Naive thymus-derived CD4-positive, alpha-beta T cell (primary cell): ENCODE measurements at regions of chr1 and their contacts with region 1.

Region 1: GRCh38 chr1:185670187-185670627 is 64.0 kb upstream of the HMCN1 start:
- DNase-seq: peak in 8 of 9 donors; percentile 28 to 72 (median 59)
- ATAC-seq: peak; percentile 82
- H3K4me3 ChIP-seq: no peak overlapping the region
- H3K4me3 Mint-ChIP-seq: no peak overlapping the region
- H3K27ac ChIP-seq: no peak overlapping the region
- H3K27ac Mint-ChIP-seq: peak overlapping the region in 8 of 9 donors; percentile 12 to 75 (median 60)
- H3K4me1 ChIP-seq: peaks cover 4 to 20% of the 10 kb centered on the region in 2 donors
- H3K4me1 Mint-ChIP-seq: peaks cover 22 to 44% (median 33%) of the 10 kb centered on the region in 7 donors
- H3K27me3 ChIP-seq: no peaks in the 10 kb centered on the region
- H3K27me3 Mint-ChIP-seq: no peaks in the 10 kb centered on the region

Region 2: GRCh38 chr1:184805667-184806295 is 864.4 kb before region 1 on chr1:
- CTCF ChIA-PET with region 1: interaction called, 13 read pairs
- POLR2A ChIA-PET with region 1: no interaction called
- intact Hi-C with region 1: no loop called
- DNase-seq: peak; percentile 49 to 79 (median 68)
- ATAC-seq: peak; percentile 94
- H3K4me3 ChIP-seq: no peak overlapping the region
- H3K4me3 Mint-ChIP-seq: peak overlapping the region in 2 of 10 donors; percentile 2 to 27
- H3K27ac ChIP-seq: no peak overlapping the region
- H3K27ac Mint-ChIP-seq: peak overlapping the region in 2 of 9 donors; percentile 7 to 16
- H3K4me1 ChIP-seq: no peaks in the 10 kb centered on the region
- H3K4me1 Mint-ChIP-seq: peaks cover 4 to 6% (median 5%) of the 10 kb centered on the region in 7 donors
- H3K27me3 ChIP-seq: no peaks in the 10 kb centered on the region
- H3K27me3 Mint-ChIP-seq: no peaks in the 10 kb centered on the region

Region 3: GRCh38 chr1:185170291-185170848 is 499.8 kb before region 1 on chr1:
- CTCF ChIA-PET with region 1: interaction called, 4 read pairs
- POLR2A ChIA-PET with region 1: no interaction called
- intact Hi-C with region 1: loop called in 1 of 2 experiments (anchors 1 kb)
- DNase-seq: peak in 8 of 9 donors; percentile 37 to 71 (median 65)
- ATAC-seq: peak; percentile 84
- H3K4me3 ChIP-seq: no peak overlapping the region
- H3K4me3 Mint-ChIP-seq: peak overlapping the region in 4 of 10 donors; percentile 35 to 56 (median 53)
- H3K27ac ChIP-seq: no peak overlapping the region
- H3K27ac Mint-ChIP-seq: peak overlapping the region in 4 of 9 donors; percentile 6 to 62 (median 43)
- H3K4me1 ChIP-seq: peaks cover 0 to 4% of the 10 kb centered on the region in 2 donors
- H3K4me1 Mint-ChIP-seq: peaks cover 0 to 17% (median 5%) of the 10 kb centered on the region in 7 donors
- H3K27me3 ChIP-seq: no peaks in the 10 kb centered on the region
- H3K27me3 Mint-ChIP-seq: no peaks in the 10 kb centered on the region

Region 4: DNA sequence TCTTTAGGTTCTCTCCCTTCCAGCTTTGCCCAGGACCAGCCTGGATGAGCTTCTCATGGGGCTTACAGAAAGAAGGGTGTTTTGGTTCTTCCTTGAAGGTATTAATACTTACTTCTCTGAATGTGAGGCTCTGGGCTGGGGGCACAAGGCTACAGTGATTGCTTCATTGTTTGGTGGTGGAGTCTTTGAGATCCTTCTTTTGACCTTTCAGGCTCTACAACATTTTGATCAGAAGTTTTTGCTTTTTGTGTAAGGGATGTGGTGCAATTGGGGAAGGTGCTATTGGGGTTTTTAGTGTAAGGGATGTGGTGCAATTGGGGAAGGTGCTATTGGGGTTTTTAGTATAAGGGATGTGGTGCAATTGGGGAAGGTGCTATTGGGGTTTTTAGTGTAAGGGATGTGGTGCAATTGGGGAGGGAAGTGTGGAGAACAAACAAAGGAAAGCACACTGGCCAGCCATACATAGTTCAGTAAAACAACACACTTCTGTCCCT is 249.6 kb before region 1 on chr1:
- CTCF ChIA-PET with region 1: interaction called, 4 read pairs
- POLR2A ChIA-PET with region 1: no interaction called
- intact Hi-C with region 1: loop called in 1 of 2 experiments (anchors 5 kb)
- DNase-seq: no peak
- ATAC-seq: peak; percentile 90
- H3K4me3 ChIP-seq: no peak overlapping the region
- H3K4me3 Mint-ChIP-seq: peak overlapping the region in 1 of 10 donors; percentile 71
- H3K27ac ChIP-seq: no peak overlapping the region
- H3K27ac Mint-ChIP-seq: peak overlapping the region in 3 of 9 donors; percentile 9 to 95 (median 42)
- H3K4me1 ChIP-seq: peaks cover 0 to 21% of the 10 kb centered on the region in 2 donors
- H3K4me1 Mint-ChIP-seq: peaks cover 0 to 69% (median 3%) of the 10 kb centered on the region in 7 donors
- H3K27me3 ChIP-seq: no peaks in the 10 kb centered on the region
- H3K27me3 Mint-ChIP-seq: no peaks in the 10 kb centered on the region

Region 5: DNA sequence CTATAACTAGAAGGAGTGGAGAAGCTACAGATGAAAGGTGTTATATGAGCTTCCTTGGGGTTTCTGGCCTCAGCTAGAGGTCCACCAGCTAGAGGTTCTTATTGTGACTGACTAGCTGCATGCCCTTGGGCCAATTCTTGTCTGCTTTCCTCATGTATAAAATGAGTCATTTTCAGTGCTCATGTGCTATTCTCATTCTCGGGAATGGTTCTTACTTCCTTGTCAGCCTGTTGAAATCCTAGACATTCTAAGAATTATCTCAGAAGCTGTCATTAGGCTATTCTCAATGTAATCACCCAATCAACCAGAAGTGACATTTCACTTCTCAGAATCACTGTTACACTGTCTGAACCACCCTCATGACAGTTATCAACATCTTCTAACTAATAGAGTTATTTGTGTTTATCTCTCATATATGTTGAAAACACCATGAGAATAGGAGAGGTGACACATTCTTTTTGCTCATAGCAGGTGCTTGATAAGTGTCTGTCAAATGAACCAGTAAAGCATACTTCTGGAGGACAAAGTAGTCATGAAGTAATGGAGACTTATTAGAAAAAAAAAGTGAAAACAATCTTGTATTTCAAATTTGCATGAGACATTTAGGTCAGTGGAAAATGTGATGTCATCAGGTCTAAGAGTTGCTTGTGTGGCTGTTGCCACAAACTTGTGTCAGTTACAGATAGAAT is 230.3 kb before region 1 on chr1:
- CTCF ChIA-PET with region 1: no interaction called
- POLR2A ChIA-PET with region 1: no interaction called
- intact Hi-C with region 1: no loop called
- DNase-seq: peak in 1 of 9 donors; percentile 34
- ATAC-seq: peak; percentile 80
- H3K4me3 ChIP-seq: no peak overlapping the region
- H3K4me3 Mint-ChIP-seq: no peak overlapping the region
- H3K27ac ChIP-seq: no peak overlapping the region
- H3K27ac Mint-ChIP-seq: no peak overlapping the region
- H3K4me1 ChIP-seq: peaks cover 0 to 20% of the 10 kb centered on the region in 2 donors
- H3K4me1 Mint-ChIP-seq: peaks cover 0 to 36% (median 3%) of the 10 kb centered on the region in 7 donors
- H3K27me3 ChIP-seq: no peaks in the 10 kb centered on the region
- H3K27me3 Mint-ChIP-seq: no peaks in the 10 kb centered on the region

Region 6: GRCh38 chr1:185566995-185567394 is 103.2 kb before region 1 on chr1:
- CTCF ChIA-PET with region 1: interaction called, 3 read pairs
- POLR2A ChIA-PET with region 1: interaction called, 6 read pairs
- intact Hi-C with region 1: loop called (anchors 1 to 5 kb)
- DNase-seq: peak in 7 of 9 donors; percentile 85 to 94 (median 91)
- ATAC-seq: peak; percentile 92
- H3K4me3 ChIP-seq: no peak overlapping the region
- H3K4me3 Mint-ChIP-seq: peak overlapping the region; percentile 46 to 87 (median 78)
- H3K27ac ChIP-seq: peak overlapping the region; percentile 89
- H3K27ac Mint-ChIP-seq: peak overlapping the region; percentile 96 to 100 (median 98)
- H3K4me1 ChIP-seq: peaks cover 37 to 56% of the 10 kb centered on the region in 2 donors
- H3K4me1 Mint-ChIP-seq: peaks cover 47 to 91% (median 86%) of the 10 kb centered on the region in 7 donors
- H3K27me3 ChIP-seq: no peaks in the 10 kb centered on the region
- H3K27me3 Mint-ChIP-seq: no peaks in the 10 kb centered on the region

Region 7: GRCh38 chr1:185646202-185646683 is 24.0 kb before region 1 on chr1:
- CTCF ChIA-PET with region 1: interaction called, 15 read pairs
- POLR2A ChIA-PET with region 1: no interaction called
- intact Hi-C with region 1: no loop called
- DNase-seq: no peak
- ATAC-seq: no peak
- H3K4me3 ChIP-seq: no peak overlapping the region
- H3K4me3 Mint-ChIP-seq: peak overlapping the region in 8 of 10 donors; percentile 11 to 62 (median 46)
- H3K27ac ChIP-seq: no peak overlapping the region
- H3K27ac Mint-ChIP-seq: peak overlapping the region in 7 of 9 donors; percentile 48 to 97 (median 85)
- H3K4me1 ChIP-seq: peaks cover 3 to 19% of the 10 kb centered on the region in 2 donors
- H3K4me1 Mint-ChIP-seq: peaks cover 17 to 53% (median 41%) of the 10 kb centered on the region in 7 donors
- H3K27me3 ChIP-seq: no peaks in the 10 kb centered on the region
- H3K27me3 Mint-ChIP-seq: no peaks in the 10 kb centered on the region

Region 8: GRCh38 chr1:185681034-185681633 is 10.9 kb after region 1 on chr1:
- CTCF ChIA-PET with region 1: interaction called, 32 read pairs
- POLR2A ChIA-PET with region 1: interaction called, 4 read pairs
- intact Hi-C with region 1: no loop called
- DNase-seq: peak in 6 of 9 donors; percentile 19 to 53 (median 40)
- ATAC-seq: peak; percentile 65
- H3K4me3 ChIP-seq: no peak overlapping the region
- H3K4me3 Mint-ChIP-seq: peak overlapping the region in 2 of 10 donors; percentile 12 to 39
- H3K27ac ChIP-seq: no peak overlapping the region
- H3K27ac Mint-ChIP-seq: peak overlapping the region in 1 of 9 donors; percentile 14
- H3K4me1 ChIP-seq: peaks cover 4 to 13% of the 10 kb centered on the region in 2 donors
- H3K4me1 Mint-ChIP-seq: peaks cover 13 to 41% (median 28%) of the 10 kb centered on the region in 7 donors
- H3K27me3 ChIP-seq: no peaks in the 10 kb centered on the region
- H3K27me3 Mint-ChIP-seq: peaks cover 0 to 16% (median 0%) of the 10 kb centered on the region in 5 donors

Region 9: DNA sequence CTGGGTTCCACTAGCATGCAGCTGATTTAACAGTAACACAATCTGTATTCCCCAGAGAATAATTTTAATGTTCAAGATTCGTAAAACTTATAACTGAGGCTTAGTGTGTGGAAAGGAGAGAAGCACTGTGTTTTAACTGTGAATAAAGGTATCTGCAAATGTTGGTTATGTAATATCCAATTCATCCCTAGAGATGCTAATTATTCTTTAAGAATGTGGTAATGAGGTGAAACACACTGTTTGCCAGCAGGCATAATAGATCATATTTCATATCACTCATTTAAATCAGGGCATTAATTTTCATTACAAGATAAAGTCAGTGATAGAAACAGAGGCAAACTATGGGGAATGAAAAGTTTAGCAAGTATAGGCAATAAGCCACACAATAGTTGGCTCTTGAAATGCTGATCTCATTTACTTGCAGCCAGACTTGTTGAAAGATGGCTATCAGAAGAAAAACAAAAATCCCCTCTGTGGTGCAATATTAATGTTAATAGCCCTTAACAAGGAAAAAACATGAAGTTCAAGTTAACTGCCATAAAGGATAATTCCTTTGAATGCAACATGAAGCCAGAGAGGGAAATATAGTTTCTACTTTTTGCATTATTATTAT is 97.4 kb after region 1 on chr1:
- CTCF ChIA-PET with region 1: no interaction called
- POLR2A ChIA-PET with region 1: no interaction called
- intact Hi-C with region 1: no loop called
- DNase-seq: no peak
- ATAC-seq: no peak
- H3K4me3 ChIP-seq: no peak overlapping the region
- H3K4me3 Mint-ChIP-seq: no peak overlapping the region
- H3K27ac ChIP-seq: no peak overlapping the region
- H3K27ac Mint-ChIP-seq: no peak overlapping the region
- H3K4me1 ChIP-seq: no peaks in the 10 kb centered on the region
- H3K4me1 Mint-ChIP-seq: no peaks in the 10 kb centered on the region
- H3K27me3 ChIP-seq: no peaks in the 10 kb centered on the region
- H3K27me3 Mint-ChIP-seq: peaks cover 6 to 25% (median 20%) of the 10 kb centered on the region in 5 donors